Posterior cingulate gyrus (tissue), 11 donors: ENCODE measurements at regions of chr3 and their contacts with region 1.

Region 1: DNA sequence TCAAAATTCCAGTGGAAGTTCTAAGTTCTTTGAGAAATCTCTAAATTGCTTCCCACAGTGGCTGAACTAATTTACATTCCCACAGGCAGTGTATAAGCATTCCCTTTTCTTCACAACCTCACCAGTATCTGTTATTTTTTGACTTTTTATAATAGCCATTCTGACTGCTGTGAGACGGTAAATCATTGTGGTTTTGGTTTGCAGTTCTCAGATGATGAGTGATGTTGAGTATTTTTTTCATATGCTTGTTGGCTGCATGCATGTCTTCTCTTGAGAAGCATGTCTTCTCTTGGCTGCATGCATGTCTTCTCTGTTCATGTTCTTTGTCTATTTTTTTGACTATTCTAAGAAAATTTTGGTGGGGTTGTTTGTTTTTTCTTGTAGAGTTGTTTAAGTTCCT is 499.6 kb upstream of the CCDC54 start:
- DNase-seq: no peak

Region 2: DNA sequence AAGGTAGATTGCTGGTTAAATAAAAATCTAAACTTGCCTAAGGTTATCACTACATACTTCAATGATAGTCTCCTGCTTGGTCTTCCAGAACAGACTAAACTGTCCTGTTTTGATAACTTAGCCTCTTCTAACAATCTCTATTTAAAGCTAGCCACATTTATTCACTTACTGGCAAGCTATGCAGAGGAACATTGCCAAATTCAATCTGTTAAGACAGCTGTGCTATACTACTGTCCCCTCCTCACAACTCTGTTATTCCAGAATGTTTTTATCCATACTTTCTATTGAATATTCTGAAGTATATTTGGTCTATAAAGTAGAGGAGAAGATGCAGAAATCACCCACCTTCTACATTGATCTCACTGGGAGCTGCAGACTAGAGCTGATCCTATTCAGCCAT is 94.4 kb before region 1 on chr3:
- intact Hi-C with region 1: no loop called
- DNase-seq: no peak

Region 3: GRCh38 chr3:106908181-106909051 is 30.8 kb after region 1 on chr3:
- intact Hi-C with region 1: loop called (anchors 1 kb)
- DNase-seq: peak in 2 of 10 donors; percentile 29 to 58